Tibial artery (tissue), 4 donors: ENCODE measurements at regions of chr1 and their contacts with region 1.

Region 1: GRCh38 chr1:155160128-155160527 is 13.0 kb downstream of the KRTCAP2 start:
- DNase-seq: peak in 1 of 2 donors; percentile 37
- H3K4me3 ChIP-seq: no peak overlapping the region
- H3K27ac ChIP-seq: no peak overlapping the region
- H3K4me1 ChIP-seq: no peaks in the 10 kb centered on the region
- H3K27me3 ChIP-seq: no peaks in the 10 kb centered on the region
- CTCF ChIP-seq: no peak

Region 2: GRCh38 chr1:155105604-155106022 is 54.5 kb before region 1 on chr1:
- intact Hi-C with region 1: loop called (anchors 2 kb)
- DNase-seq: peak in 1 of 2 donors; percentile 51
- H3K4me3 ChIP-seq: no peak overlapping the region
- H3K27ac ChIP-seq: no peak overlapping the region
- H3K4me1 ChIP-seq: no peaks in the 10 kb centered on the region
- H3K27me3 ChIP-seq: peaks cover 0 to 7% of the 10 kb centered on the region in 2 donors
- CTCF ChIP-seq: no peak

Region 3: GRCh38 chr1:155227261-155228095 is 67.3 kb after region 1 on chr1:
- intact Hi-C with region 1: no loop called
- DNase-seq: peak; percentile 98 to 100
- H3K4me3 ChIP-seq: peak overlapping the region; percentile 53 to 66
- H3K27ac ChIP-seq: peak overlapping the region; percentile 80 to 84
- H3K4me1 ChIP-seq: peaks cover 0 to 49% (median 28%) of the 10 kb centered on the region in 4 donors
- H3K27me3 ChIP-seq: no peaks in the 10 kb centered on the region
- CTCF ChIP-seq: peak in 1 of 2 experiments; percentile 5